ENCODE measurements at regions of chr5 and their contacts with region 1.

Region 1: DNA sequence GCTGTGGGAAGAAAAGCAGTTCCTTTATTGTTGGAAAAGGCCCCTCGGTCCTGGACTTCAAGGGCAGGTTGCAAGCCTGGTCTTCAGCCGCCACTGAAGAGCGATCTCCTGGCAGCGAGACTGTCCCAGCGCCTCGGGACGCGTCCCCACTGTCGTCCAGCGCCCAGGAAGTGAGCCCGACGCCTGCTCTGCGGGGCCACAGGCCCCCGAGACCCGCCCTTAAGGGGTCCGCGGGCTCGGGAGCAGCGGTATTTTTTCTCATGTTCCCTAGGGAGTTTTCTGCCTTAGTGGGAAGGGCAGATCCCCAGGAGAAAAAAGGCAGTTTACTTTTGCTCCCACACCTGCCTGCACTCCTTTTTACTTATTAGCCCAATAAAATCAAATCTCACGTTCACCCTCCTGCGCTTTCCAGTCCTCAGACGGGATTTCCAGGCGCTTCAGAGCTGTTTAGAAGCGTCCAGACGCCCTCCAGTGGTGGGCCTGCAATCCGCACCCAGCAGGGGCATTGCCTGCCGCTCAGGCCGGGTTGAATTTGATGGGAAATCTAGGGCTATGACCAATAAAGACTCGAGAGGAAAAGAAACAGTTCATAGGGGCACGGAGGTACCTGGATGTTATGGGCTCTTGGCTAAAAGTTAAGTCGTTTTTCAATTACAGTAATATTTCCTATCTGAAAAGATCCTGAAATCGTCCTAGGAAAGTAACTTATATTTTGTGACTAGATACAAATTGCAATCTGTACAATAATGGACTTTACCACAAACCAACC is 2.8 kb upstream of the EFNA5 start:
- DNase-seq: peak; percentile 82
- H3K4me3 ChIP-seq: peak overlapping the region; percentile 52 to 92 (median 56)
- H3K27ac ChIP-seq: peak overlapping the region; percentile 84
- H3K4me1 ChIP-seq: peaks cover 22% of the 10 kb centered on the region
- H3K27me3 ChIP-seq: no peaks in the 10 kb centered on the region
- CTCF ChIP-seq: peak; percentile 95 to 99

Region 2: GRCh38 chr5:107104040-107104995 is 569.2 kb before region 1 on chr5:
- CTCF ChIA-PET with region 1: no interaction called
- dilution Hi-C with region 1: no loop called
- in situ Hi-C with region 1: no loop called
- intact Hi-C with region 1: loop called (anchors 1 kb)
- DNase-seq: no peak
- H3K4me3 ChIP-seq: no peak overlapping the region
- H3K27ac ChIP-seq: no peak overlapping the region
- H3K4me1 ChIP-seq: no peaks in the 10 kb centered on the region
- H3K27me3 ChIP-seq: no peaks in the 10 kb centered on the region
- CTCF ChIP-seq: peak in 1 of 2 donors; percentile 29

Region 3: GRCh38 chr5:107306597-107306996 is 367.0 kb before region 1 on chr5:
- CTCF ChIA-PET with region 1: no interaction called
- dilution Hi-C with region 1: no loop called
- in situ Hi-C with region 1: no loop called
- intact Hi-C with region 1: loop called (anchors 1 kb)
- DNase-seq: no peak
- H3K4me3 ChIP-seq: no peak overlapping the region
- H3K27ac ChIP-seq: no peak overlapping the region
- H3K4me1 ChIP-seq: no peaks in the 10 kb centered on the region
- H3K27me3 ChIP-seq: no peaks in the 10 kb centered on the region
- CTCF ChIP-seq: peak in 1 of 2 donors; percentile 6

Region 4: GRCh38 chr5:107407713-107408298 is 265.7 kb before region 1 on chr5:
- CTCF ChIA-PET with region 1: interaction called, 23 read pairs
- dilution Hi-C with region 1: no loop called
- in situ Hi-C with region 1: no loop called
- intact Hi-C with region 1: no loop called
- DNase-seq: no peak
- H3K4me3 ChIP-seq: no peak overlapping the region
- H3K27ac ChIP-seq: no peak overlapping the region
- H3K4me1 ChIP-seq: peaks cover 23% of the 10 kb centered on the region
- H3K27me3 ChIP-seq: no peaks in the 10 kb centered on the region
- CTCF ChIP-seq: no peak

Region 5: DNA sequence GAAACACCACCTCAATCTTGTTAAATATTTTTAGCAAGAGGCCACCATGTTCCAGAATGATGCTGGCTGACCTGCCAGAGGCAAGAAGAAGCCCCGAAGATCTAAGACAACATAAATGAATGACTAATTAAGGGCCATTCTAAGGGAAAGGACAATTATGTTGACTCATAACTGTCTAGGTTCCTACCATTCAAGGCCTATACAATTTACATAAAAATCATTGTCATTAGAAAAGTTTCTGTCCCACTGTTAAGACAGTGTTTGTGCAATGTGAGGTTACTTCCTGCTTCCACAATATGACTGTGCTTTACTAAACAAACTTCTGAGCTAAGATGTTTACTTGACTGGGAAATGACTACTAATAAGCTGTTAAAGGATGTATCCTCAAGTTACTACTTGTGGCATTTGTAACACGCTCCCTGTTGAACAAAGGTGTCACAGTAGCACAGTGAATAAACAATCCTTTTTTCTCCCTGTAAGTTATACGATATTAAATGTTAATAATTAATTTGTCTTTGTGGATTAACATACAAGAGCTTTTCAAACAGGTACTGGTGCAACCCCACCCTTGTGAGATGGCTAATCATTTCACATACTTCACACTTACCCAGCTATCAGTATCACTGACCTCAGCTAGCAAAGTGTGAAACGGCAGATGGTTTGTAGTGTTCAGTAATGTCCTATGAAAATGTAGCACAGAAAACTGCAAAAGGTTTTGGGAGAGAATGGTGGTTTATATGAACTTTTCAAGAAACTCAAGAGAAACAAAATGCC is 198.6 kb before region 1 on chr5:
- CTCF ChIA-PET with region 1: no interaction called
- dilution Hi-C with region 1: loop called (anchors 25 kb)
- in situ Hi-C with region 1: loop called in 1 of 2 experiments (anchors 25 kb)
- intact Hi-C with region 1: no loop called
- DNase-seq: peak; percentile 32
- H3K4me3 ChIP-seq: no peak overlapping the region
- H3K27ac ChIP-seq: peak overlapping the region; percentile 39
- H3K4me1 ChIP-seq: peaks cover 41% of the 10 kb centered on the region
- H3K27me3 ChIP-seq: no peaks in the 10 kb centered on the region
- CTCF ChIP-seq: no peak

Region 6: GRCh38 chr5:107571621-107572536 is 101.7 kb before region 1 on chr5:
- CTCF ChIA-PET with region 1: interaction called, 14 read pairs
- dilution Hi-C with region 1: loop called (anchors 5 kb)
- in situ Hi-C with region 1: loop called in 1 of 2 experiments (anchors 5 kb)
- intact Hi-C with region 1: loop called (anchors 1 kb)
- DNase-seq: peak; percentile 97
- H3K4me3 ChIP-seq: peak overlapping the region; percentile 20 to 42 (median 35)
- H3K27ac ChIP-seq: peak overlapping the region; percentile 80
- H3K4me1 ChIP-seq: peaks cover 64% of the 10 kb centered on the region
- H3K27me3 ChIP-seq: no peaks in the 10 kb centered on the region
- CTCF ChIP-seq: peak; percentile 79 to 92

Region 7: GRCh38 chr5:107753427-107753826 is 79.9 kb after region 1 on chr5:
- CTCF ChIA-PET with region 1: no interaction called
- dilution Hi-C with region 1: no loop called
- in situ Hi-C with region 1: no loop called
- intact Hi-C with region 1: no loop called
- DNase-seq: no peak
- H3K4me3 ChIP-seq: no peak overlapping the region
- H3K27ac ChIP-seq: no peak overlapping the region
- H3K4me1 ChIP-seq: no peaks in the 10 kb centered on the region
- H3K27me3 ChIP-seq: peaks cover 3% of the 10 kb centered on the region
- CTCF ChIP-seq: no peak